Calu3 (cell line): ENCODE measurements at regions of chr14 and their contacts with region 1.

Region 1: GRCh38 chr14:31937721-31938346 is 139.3 kb upstream of the ARHGAP5 start:
- DNase-seq: peak; percentile 76
- H3K4me3 Mint-ChIP-seq: no peak overlapping the region
- H3K27ac Mint-ChIP-seq: peak overlapping the region; percentile 94
- H3K4me1 Mint-ChIP-seq: peaks cover 46% of the 10 kb centered on the region
- H3K27me3 Mint-ChIP-seq: no peaks in the 10 kb centered on the region
- CTCF ChIP-seq: no peak

Region 2: DNA sequence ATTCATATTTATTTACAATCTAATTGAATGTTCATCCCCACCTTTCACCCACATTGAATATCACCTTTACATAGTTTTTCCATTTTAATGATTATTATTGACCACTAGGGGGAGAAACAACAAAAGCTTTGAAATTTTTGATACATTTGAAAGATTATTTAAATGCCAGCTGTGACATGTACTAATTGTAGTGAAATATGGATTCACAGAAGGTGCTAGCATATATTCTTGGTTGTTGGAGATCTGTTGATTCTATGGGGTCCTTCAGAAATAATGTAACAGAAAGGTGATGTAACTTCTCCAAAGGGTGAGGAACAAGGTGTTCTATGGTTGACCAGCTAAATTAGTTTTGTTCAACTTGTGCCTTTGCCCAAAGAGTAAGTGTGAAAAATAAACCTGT is 427.6 kb before region 1 on chr14:
- CTCF ChIA-PET with region 1: interaction called, 3 read pairs
- intact Hi-C with region 1: loop called (anchors 5 kb)
- DNase-seq: no peak
- H3K4me3 Mint-ChIP-seq: no peak overlapping the region
- H3K27ac Mint-ChIP-seq: no peak overlapping the region
- H3K4me1 Mint-ChIP-seq: no peaks in the 10 kb centered on the region
- H3K27me3 Mint-ChIP-seq: no peaks in the 10 kb centered on the region
- CTCF ChIP-seq: no peak

Region 3: DNA sequence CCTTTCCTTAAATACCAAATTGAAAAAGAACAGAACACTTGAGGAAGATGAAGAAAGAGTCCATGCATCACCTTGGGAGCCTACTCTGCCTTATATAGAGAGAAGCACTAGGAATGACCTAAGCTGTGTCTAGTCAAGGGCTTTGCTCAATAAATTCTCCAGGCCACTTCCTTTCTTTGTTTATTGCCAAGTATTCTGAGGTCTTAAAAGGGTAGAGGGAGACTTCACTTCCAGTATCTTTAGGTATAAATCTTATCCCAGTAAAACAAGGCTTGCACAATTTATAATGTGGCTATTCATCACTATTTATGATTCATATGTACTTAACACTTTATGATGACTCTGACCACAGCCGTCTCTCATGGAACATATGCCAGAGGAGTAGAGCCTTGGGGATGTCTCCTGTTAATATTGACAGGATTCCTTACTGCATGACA is 54.2 kb after region 1 on chr14:
- CTCF ChIA-PET with region 1: no interaction called
- intact Hi-C with region 1: no loop called
- DNase-seq: no peak
- H3K4me3 Mint-ChIP-seq: no peak overlapping the region
- H3K27ac Mint-ChIP-seq: no peak overlapping the region
- H3K4me1 Mint-ChIP-seq: peaks cover 59% of the 10 kb centered on the region
- H3K27me3 Mint-ChIP-seq: no peaks in the 10 kb centered on the region
- CTCF ChIP-seq: no peak

Region 4: GRCh38 chr14:32009976-32010863 is 72.4 kb after region 1 on chr14:
- CTCF ChIA-PET with region 1: no interaction called
- intact Hi-C with region 1: loop called (anchors 2 kb)
- DNase-seq: no peak
- H3K4me3 Mint-ChIP-seq: no peak overlapping the region
- H3K27ac Mint-ChIP-seq: peak overlapping the region; percentile 7
- H3K4me1 Mint-ChIP-seq: peaks cover 68% of the 10 kb centered on the region
- H3K27me3 Mint-ChIP-seq: no peaks in the 10 kb centered on the region
- CTCF ChIP-seq: no peak

Region 5: DNA sequence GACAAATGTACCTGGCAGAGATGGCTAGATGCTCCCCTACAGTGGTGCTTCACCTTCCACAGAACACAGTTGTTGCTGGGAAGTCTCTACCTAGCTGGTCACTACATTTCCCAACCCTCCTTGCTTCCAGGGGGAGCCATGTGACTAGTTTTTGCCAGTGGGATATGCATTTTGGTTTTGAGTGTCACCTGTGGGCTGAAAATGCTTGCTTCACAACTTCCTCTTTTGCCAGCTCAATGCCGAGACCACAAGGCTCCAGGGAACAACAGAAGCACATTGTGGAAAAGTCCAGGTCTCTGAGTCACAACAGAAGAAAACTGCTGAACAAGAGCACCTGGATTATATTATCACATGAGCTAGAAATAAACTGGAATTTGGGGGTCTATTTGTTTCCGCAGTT is 90.8 kb after region 1 on chr14:
- CTCF ChIA-PET with region 1: no interaction called
- intact Hi-C with region 1: loop called (anchors 5 kb)
- DNase-seq: peak; percentile 45
- H3K4me3 Mint-ChIP-seq: no peak overlapping the region
- H3K27ac Mint-ChIP-seq: peak overlapping the region; percentile 36
- H3K4me1 Mint-ChIP-seq: peaks cover 26% of the 10 kb centered on the region
- H3K27me3 Mint-ChIP-seq: no peaks in the 10 kb centered on the region
- CTCF ChIP-seq: no peak

Region 6: DNA sequence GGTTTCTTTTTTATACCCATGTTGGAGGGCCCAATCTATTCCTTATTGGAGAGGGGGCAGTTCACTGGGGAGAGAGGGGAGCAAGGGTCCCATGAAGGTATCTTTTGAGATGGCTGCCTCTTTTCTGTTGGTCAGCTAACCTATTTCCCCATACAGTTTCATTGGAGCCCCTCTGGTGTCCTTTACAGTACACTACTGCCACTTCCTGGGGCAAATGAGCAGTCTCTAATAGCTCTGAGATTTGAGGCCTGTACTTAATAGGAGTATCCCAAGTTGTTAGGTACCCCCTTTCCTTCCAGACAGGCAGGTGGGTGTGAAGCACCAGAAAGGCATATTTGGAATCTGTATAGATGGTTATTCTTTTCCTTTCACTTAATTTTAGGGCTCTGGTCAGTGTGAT is 306.6 kb after region 1 on chr14:
- CTCF ChIA-PET with region 1: interaction called, 20 read pairs
- intact Hi-C with region 1: no loop called
- DNase-seq: no peak
- H3K4me3 Mint-ChIP-seq: no peak overlapping the region
- H3K27ac Mint-ChIP-seq: no peak overlapping the region
- H3K4me1 Mint-ChIP-seq: no peaks in the 10 kb centered on the region
- H3K27me3 Mint-ChIP-seq: peaks cover 44% of the 10 kb centered on the region
- CTCF ChIP-seq: no peak

Region 7: GRCh38 chr14:32252030-32252670 is 314.3 kb after region 1 on chr14:
- CTCF ChIA-PET with region 1: interaction called, 8 read pairs
- intact Hi-C with region 1: loop called (anchors 1 kb)
- DNase-seq: peak; percentile 65
- H3K4me3 Mint-ChIP-seq: no peak overlapping the region
- H3K27ac Mint-ChIP-seq: no peak overlapping the region
- H3K4me1 Mint-ChIP-seq: no peaks in the 10 kb centered on the region
- H3K27me3 Mint-ChIP-seq: no peaks in the 10 kb centered on the region
- CTCF ChIP-seq: peak; percentile 58

Region 8: DNA sequence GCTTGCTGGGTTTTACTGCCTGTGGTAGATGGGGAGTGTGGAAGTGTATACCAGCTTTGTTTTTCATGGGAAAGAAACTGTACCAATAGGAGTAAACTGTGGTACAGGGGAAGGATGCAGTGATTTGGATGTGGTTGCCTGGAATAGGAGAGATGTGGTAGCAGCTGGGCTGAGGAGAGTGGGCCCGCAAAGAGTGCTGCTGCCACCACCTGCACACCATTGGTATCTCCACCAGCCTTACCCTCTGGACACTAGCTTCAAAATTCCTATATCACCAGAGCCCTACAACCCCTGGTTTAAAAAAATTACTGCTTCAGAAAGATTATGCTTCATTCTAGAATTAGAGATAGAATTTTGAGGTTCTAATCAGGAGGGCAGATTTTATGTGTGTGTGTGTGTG is 444.9 kb after region 1 on chr14:
- CTCF ChIA-PET with region 1: interaction called, 5 read pairs
- intact Hi-C with region 1: loop called (anchors 5 kb)
- DNase-seq: peak; percentile 61
- H3K4me3 Mint-ChIP-seq: no peak overlapping the region
- H3K27ac Mint-ChIP-seq: no peak overlapping the region
- H3K4me1 Mint-ChIP-seq: peaks cover 45% of the 10 kb centered on the region
- H3K27me3 Mint-ChIP-seq: no peaks in the 10 kb centered on the region
- CTCF ChIP-seq: peak; percentile 46